Caco-2 (cell line): ENCODE measurements at regions of chr6 and their contacts with region 1.

Region 1: GRCh38 chr6:37566111-37566949 is 66.6 kb upstream of the CCDC167 start:
- DNase-seq: peak; percentile 47 to 80
- H3K4me3 ChIP-seq: peak overlapping the region; percentile 30
- H3K4me3 Mint-ChIP-seq: peak overlapping the region; percentile 64
- H3K27ac Mint-ChIP-seq: no peak overlapping the region
- H3K4me1 ChIP-seq: peaks cover 6% of the 10 kb centered on the region; the same call in 1 of the 2 replicates
- H3K4me1 Mint-ChIP-seq: peaks cover 8% of the 10 kb centered on the region
- H3K27me3 ChIP-seq: no peaks in the 10 kb centered on the region
- H3K27me3 Mint-ChIP-seq: no peaks in the 10 kb centered on the region
- CTCF ChIP-seq: peak; percentile 77 to 86

Region 2: DNA sequence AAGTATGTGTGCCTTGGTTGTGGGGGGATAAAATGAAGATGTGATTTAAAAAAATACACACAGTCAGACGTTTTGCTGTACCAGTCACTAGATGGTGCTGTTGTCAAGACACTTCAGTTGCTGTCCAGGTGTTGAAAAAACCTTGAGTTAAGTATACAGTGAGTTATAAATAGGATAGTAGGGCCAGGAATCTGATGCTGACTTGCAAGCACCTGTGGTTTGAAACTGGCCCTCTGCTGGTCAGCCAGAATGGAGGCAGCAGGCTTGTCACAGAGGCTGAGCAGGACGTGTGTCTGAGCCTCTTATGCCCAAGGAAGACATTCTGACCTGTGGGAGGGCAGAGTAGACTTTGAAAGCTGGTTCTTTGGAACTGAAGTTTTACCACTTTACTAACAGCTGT is 184.8 kb before region 1 on chr6:
- CTCF ChIA-PET with region 1: no interaction called
- POLR2A ChIA-PET with region 1: no interaction called
- intact Hi-C with region 1: loop called (anchors 5 kb)
- DNase-seq: peak; percentile 82 to 84
- H3K4me3 ChIP-seq: no peak overlapping the region
- H3K4me3 Mint-ChIP-seq: no peak overlapping the region
- H3K27ac Mint-ChIP-seq: peak overlapping the region; percentile 31
- H3K4me1 ChIP-seq: peaks cover 25% of the 10 kb centered on the region
- H3K4me1 Mint-ChIP-seq: peaks cover 16% of the 10 kb centered on the region
- H3K27me3 ChIP-seq: no peaks in the 10 kb centered on the region
- H3K27me3 Mint-ChIP-seq: no peaks in the 10 kb centered on the region
- CTCF ChIP-seq: peak; percentile 67 to 85

Region 3: DNA sequence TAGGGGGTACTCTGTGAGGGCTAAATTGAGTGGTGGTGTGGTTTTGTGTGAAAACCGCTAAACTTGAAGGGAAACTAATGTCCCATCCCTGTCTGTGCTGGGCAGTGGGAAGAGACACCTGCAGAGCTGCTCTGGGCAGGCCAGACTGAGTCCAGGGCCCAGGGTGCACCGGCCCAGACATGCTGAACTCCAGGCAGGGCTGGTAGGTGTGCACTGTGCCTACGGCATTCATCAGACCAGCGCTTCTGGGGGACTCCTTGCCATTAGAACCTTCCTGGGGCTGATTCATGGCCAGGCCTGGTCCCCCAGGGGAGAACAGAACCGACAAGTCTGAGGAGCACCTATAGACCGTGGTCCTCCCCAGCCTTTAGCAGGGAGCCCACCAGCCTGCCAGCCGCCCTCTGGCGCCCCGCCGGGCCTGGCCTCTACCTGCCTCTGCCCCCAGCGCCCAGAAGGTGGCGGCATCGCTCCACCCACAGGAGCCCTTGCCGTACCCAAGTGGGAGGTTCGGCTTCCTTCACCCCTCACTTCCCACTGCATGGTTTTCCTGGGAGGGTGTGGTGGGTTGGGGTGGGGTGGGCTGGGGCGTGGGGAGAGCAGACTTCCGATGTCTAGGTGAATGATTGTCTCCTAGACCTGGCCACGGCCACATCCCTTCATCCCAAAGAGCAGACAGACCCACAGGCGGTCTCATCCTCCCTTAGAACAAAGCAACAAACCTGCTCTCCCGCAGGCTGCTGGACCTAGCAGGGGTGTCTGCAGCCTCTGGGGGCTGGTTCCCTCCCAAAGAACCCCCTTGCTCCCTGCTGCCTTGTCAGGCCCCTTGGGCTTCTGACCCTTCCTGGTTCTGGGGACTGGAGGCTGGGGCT is 82.2 kb before region 1 on chr6:
- CTCF ChIA-PET with region 1: interaction called, 8 read pairs
- POLR2A ChIA-PET with region 1: no interaction called
- intact Hi-C with region 1: loop called (anchors 1 kb)
- DNase-seq: peak; percentile 61 to 80
- H3K4me3 ChIP-seq: no peak overlapping the region
- H3K4me3 Mint-ChIP-seq: no peak overlapping the region
- H3K27ac Mint-ChIP-seq: no peak overlapping the region
- H3K4me1 ChIP-seq: no peaks in the 10 kb centered on the region
- H3K4me1 Mint-ChIP-seq: no peaks in the 10 kb centered on the region
- H3K27me3 ChIP-seq: no peaks in the 10 kb centered on the region
- H3K27me3 Mint-ChIP-seq: no peaks in the 10 kb centered on the region
- CTCF ChIP-seq: peak; percentile 87 to 94

Region 4: DNA sequence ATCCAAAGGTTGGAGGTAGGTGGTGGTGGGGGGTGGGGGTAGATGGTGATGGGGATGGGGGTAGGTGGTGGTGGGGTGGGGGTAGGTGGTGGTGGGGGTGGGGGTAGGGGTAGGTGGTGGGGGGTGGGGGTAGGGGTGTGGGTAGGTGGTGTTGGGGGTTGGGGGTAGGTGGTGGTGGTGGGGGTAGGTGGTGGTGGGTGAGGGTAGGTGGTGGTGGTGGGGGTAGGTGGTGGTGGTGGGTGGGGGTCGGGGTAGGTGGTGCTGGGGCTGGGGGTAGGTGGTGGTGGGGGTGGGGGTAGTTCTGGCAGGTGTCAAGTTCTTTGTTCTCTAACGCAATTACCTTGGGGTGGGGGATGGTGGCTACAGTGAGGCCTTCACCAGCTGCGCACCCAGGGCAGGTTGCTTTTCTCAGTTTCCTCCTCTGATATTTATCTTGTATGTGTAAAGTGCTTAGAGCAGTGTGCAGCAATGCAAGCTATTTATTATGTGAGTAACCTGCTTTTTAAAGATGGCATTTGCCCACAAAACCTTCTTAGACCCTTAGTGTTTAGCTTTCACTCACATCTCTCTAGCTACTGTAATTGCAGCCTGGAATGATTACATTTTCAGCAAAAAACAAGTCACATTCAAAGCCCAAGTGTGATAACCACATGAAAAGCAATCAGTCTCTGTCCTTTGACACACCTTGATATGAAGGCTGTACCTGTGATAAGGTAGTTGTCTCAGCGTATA is 58.5 kb before region 1 on chr6:
- CTCF ChIA-PET with region 1: interaction called, 13 read pairs
- POLR2A ChIA-PET with region 1: no interaction called
- intact Hi-C with region 1: no loop called
- DNase-seq: peak; percentile 65 to 77
- H3K4me3 ChIP-seq: peak overlapping the region; percentile 21
- H3K4me3 Mint-ChIP-seq: peak overlapping the region; percentile 48
- H3K27ac Mint-ChIP-seq: peak overlapping the region; percentile 53
- H3K4me1 ChIP-seq: peaks cover 53% of the 10 kb centered on the region
- H3K4me1 Mint-ChIP-seq: peaks cover 35% of the 10 kb centered on the region
- H3K27me3 ChIP-seq: no peaks in the 10 kb centered on the region
- H3K27me3 Mint-ChIP-seq: no peaks in the 10 kb centered on the region
- CTCF ChIP-seq: no peak

Region 5: DNA sequence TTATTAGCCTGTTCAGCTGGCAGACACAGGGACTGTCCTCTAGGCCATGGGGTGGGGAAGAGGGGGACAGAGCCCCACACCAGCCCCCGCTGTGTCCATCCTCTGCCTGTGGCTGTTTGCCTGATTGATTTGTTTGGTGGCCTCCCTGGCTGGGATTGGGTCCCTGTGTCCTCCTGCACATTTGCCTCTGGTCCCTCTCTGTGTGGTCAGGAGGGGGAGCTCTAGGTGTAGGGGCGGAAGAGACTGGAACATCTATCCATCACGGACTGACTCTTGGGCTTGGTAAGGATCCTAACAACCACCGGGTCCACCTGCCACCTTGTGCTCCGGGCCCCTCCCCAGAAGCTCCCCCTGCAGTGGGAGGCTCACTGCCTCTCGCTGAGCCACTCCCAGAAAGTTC is 28.2 kb before region 1 on chr6:
- CTCF ChIA-PET with region 1: interaction called, 16 read pairs
- POLR2A ChIA-PET with region 1: interaction called, 8 read pairs
- intact Hi-C with region 1: loop called (anchors 1 kb)
- DNase-seq: peak; percentile 56 to 57
- H3K4me3 ChIP-seq: no peak overlapping the region
- H3K4me3 Mint-ChIP-seq: no peak overlapping the region
- H3K27ac Mint-ChIP-seq: no peak overlapping the region
- H3K4me1 ChIP-seq: no peaks in the 10 kb centered on the region
- H3K4me1 Mint-ChIP-seq: no peaks in the 10 kb centered on the region
- H3K27me3 ChIP-seq: no peaks in the 10 kb centered on the region
- H3K27me3 Mint-ChIP-seq: no peaks in the 10 kb centered on the region
- CTCF ChIP-seq: peak in 1 of 2 experiments; percentile 55